Endothelial cell of umbilical vein (primary cell): ENCODE measurements at regions of chr1 and their contacts with region 1.

Region 1: DNA sequence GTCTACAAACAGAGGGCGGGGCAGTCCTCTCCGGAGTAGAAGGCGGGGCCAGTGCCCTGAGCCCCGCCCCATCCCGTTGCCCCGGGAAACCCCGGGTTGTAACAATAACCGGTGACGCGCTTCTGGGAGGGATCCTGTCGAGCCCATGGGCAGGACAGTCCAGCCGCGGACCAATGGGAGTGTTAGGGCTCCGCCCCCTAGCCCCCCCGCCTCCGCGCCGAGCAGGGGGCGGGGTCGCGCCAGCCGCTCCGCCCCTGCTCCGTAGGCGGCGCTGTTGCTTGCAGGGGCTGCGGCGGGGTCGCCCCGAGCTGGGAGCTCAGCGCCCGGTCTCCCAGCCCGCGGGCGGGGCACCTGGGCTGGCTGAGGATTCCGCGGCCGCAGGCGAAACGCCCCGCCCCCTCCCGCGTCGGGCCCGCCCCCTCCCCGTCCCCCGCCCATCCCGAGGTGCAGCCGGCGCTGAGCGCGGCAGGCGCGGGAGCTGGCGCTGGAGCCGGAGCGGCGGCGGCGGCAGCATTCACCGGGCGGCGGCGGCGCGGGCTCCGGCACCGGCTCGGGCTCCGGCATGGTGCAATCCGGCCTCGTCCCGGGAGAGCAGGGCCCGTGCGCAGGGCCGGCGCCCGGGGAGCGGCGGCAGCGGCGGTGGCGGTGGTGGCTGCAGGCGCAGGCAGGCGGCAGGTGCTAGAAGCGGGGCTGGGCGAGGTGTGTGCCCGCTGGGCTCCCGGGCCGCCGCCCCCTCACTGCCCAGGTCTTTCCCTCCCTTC is at the start of gene FOXO6:
- DNase-seq: peak; percentile 96
- H3K4me3 ChIP-seq: peak within 1 kb of the TSS in 2 of 3 experiments; percentile 32 to 36
- H3K27ac ChIP-seq: no peak within 1 kb of the TSS
- H3K4me1 ChIP-seq: peaks cover 3% of the 10 kb centered on the region
- H3K27me3 ChIP-seq: peaks cover 14 to 22% of the 10 kb centered on the region in 2 experiments
- CTCF ChIP-seq: peak; percentile 47 to 59
- POLR2A ChIP-seq: no peak
- total RNA-seq, gene FOXO6: 0.18 and 0.38 TPM in 2 replicates

Region 2: GRCh38 chr1:41341772-41342562 is 19.2 kb before region 1 on chr1:
- CTCF ChIA-PET with region 1: interaction called, 18 read pairs
- POLR2A ChIA-PET with region 1: no interaction called
- dilution Hi-C with region 1: no loop called
- intact Hi-C with region 1: loop called (anchors 1 kb)
- DNase-seq: peak; percentile 77
- H3K4me3 ChIP-seq: peak overlapping the region in 1 of 3 experiments; percentile 29
- H3K27ac ChIP-seq: peak overlapping the region; percentile 51
- H3K4me1 ChIP-seq: peaks cover 15% of the 10 kb centered on the region
- H3K27me3 ChIP-seq: peaks cover 4 to 6% of the 10 kb centered on the region in 2 experiments
- CTCF ChIP-seq: no peak
- POLR2A ChIP-seq: no peak

Region 3: DNA sequence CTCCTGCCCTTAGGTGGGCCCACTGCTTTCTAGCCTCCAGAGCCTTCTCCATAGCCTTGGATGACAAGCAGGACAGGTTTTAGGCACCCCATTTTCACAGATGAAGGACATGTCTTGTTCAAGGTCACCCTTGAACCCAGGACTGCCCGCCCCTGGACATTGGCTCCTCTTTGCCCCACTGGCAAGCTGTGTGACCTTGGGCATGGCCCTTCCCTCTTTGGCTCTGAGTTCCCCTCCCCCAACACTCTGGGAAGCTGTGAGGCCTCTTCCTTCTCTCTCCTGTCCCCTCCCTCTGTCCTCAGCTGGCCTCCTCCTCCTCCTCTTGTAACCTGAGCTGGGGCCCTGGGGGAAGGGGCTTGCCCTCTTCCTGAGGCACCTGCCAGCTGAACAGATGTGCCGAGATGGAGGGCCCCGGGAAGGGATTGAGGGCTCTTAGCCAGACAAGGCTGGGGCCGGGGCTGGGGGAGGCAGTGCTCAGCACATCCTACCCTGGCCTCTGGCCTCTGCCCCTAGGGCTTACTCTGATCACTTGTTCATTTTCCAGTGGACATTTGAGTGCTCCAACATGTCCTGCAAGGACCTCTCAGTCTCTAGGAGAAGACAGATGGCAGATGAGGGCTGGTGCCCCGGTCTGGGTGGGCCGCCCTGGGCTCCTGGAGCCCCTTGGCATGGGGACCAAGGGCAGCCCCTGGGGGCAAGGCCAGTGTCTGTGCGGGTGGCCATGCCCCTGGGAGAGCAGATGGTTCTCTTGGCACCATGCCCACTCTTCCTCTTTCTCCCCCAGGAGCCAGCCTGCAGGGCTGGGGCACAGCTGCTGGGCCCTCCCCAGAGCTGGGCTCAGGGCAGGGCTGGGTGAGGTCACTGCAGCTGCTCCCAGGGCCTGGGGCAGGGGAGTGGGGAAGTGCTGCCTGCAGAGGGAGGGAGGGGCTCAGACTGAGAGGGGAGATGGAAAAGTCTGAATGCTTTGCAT is 10.7 kb after region 1 on chr1:
- CTCF ChIA-PET with region 1: interaction called, 11 read pairs
- POLR2A ChIA-PET with region 1: no interaction called
- dilution Hi-C with region 1: no loop called
- intact Hi-C with region 1: no loop called
- DNase-seq: no peak
- H3K4me3 ChIP-seq: no peak overlapping the region
- H3K27ac ChIP-seq: no peak overlapping the region
- H3K4me1 ChIP-seq: no peaks in the 10 kb centered on the region
- H3K27me3 ChIP-seq: peaks cover 10 to 16% of the 10 kb centered on the region in 2 experiments
- CTCF ChIP-seq: no peak
- POLR2A ChIP-seq: no peak

Region 4: DNA sequence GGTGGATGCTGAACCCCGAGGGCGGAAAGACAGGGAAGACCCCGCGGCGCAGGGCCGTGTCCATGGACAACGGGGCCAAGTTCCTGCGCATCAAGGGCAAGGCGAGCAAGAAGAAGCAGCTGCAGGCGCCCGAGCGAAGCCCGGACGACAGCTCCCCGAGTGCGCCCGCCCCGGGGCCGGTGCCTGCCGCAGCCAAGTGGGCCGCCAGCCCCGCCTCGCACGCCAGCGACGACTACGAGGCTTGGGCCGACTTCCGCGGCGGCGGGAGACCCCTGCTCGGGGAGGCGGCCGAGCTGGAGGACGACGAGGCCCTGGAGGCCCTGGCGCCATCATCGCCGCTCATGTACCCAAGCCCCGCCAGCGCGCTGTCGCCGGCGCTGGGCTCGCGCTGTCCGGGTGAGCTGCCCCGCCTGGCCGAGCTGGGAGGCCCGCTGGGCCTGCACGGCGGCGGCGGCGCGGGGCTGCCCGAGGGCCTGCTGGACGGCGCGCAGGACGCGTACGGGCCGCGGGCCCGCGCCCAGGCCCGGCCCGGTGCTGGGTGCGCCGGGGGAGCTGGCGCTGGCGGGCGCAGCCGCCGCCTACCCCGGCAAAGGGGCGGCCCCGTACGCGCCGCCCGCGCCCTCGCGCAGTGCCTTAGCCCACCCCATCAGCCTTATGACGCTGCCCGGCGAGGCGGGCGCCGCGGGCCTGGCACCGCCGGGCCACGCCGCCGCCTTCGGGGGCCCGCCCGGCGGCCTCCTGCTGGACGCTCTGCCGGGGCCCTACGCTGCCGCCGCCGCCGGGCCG is 20.7 kb after region 1 on chr1:
- CTCF ChIA-PET with region 1: interaction called, 12 read pairs
- POLR2A ChIA-PET with region 1: interaction called, 3 read pairs
- dilution Hi-C with region 1: no loop called
- intact Hi-C with region 1: loop called (anchors 1 kb)
- DNase-seq: peak; percentile 17
- H3K4me3 ChIP-seq: peak overlapping the region; percentile 25 to 38 (median 35)
- H3K27ac ChIP-seq: peak overlapping the region; percentile 64
- H3K4me1 ChIP-seq: peaks cover 2% of the 10 kb centered on the region
- H3K27me3 ChIP-seq: peaks cover 6 to 17% of the 10 kb centered on the region in 2 experiments
- CTCF ChIP-seq: no peak
- POLR2A ChIP-seq: peak; percentile 37

Region 5: GRCh38 chr1:41504114-41505035 is 143.2 kb after region 1 on chr1:
- CTCF ChIA-PET with region 1: no interaction called
- POLR2A ChIA-PET with region 1: no interaction called
- dilution Hi-C with region 1: no loop called
- intact Hi-C with region 1: no loop called
- DNase-seq: no peak
- H3K4me3 ChIP-seq: no peak overlapping the region
- H3K27ac ChIP-seq: no peak overlapping the region
- H3K4me1 ChIP-seq: no peaks in the 10 kb centered on the region
- H3K27me3 ChIP-seq: no peaks in the 10 kb centered on the region
- CTCF ChIP-seq: no peak
- POLR2A ChIP-seq: no peak

Region 6: DNA sequence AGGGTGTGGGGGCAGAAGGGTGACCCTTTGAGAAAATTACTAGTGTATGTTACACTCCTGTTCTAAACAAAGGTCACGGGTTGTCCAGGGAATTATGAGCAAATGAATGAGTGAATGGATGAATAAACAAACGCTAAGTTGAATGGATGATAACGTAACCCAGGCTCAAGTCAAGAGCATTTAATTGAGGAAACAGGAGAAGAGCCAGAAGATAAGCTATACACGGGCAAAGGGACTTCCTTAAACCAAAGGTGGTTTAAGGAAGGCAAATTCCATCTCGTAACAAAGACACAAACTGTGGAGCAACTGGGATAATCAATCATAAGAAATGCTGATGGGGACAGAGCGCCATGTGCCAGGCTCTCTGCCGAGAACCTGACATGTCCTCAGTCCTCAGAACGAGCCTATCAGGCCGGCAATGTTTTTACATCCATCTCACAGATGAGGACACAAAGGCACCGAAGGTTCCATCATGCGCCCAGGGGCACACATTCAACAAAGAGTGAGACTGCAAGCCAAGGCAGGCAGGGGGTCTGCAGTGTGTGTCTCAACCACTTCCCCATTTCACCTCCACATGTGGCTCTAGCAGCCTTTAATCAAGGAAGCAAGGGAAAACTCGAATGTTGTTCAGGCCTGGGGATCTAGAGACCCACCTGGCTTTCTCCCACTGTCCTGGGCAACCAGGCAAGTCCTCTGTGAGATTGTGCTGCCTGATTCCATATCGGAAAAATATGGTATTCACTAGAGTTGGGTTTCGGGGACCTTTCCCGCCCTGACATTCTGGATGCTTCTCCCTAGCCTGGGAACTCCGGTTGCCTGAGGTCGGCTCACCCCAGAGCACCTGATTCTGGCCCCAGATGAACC is 250.1 kb after region 1 on chr1:
- CTCF ChIA-PET with region 1: no interaction called
- POLR2A ChIA-PET with region 1: no interaction called
- dilution Hi-C with region 1: no loop called
- intact Hi-C with region 1: no loop called
- DNase-seq: no peak
- H3K4me3 ChIP-seq: no peak overlapping the region
- H3K27ac ChIP-seq: no peak overlapping the region
- H3K4me1 ChIP-seq: no peaks in the 10 kb centered on the region
- H3K27me3 ChIP-seq: peaks cover 0 to 3% of the 10 kb centered on the region in 2 experiments
- CTCF ChIP-seq: no peak
- POLR2A ChIP-seq: no peak

Region 7: DNA sequence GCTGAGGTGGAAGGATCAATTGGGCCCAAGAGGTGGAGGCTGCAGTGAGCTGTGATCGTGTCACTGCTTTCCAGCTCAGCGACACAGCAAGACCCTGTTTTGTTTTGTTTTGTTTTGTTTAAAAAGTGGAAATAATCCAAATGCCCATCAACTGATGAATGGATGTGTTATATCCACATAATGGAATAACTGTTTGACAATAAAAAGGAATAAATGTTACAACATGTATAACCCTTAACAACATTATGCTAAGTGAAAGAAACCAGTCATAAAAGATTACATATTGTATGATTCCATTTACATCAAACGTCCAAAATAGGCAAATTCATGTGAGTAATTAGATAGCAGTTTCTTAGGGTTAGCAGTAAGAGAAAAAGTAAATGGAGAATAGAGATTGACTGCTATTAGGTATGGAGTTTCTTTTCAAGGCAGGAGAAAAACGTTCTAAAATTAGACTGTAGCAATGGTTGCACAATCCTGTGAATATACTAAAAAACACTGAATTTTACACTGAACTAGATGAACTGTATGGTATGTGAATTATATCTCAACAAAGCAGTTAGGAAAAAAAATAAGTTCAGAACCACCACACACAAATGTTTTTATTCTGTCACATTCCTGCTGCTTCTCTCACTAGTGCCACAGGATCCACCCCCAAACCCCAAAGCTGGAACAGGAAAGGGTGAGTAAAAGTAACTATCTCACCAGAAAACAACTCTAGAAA is 958.1 kb after region 1 on chr1:
- CTCF ChIA-PET with region 1: no interaction called
- POLR2A ChIA-PET with region 1: no interaction called
- dilution Hi-C with region 1: no loop called
- intact Hi-C with region 1: no loop called
- DNase-seq: peak; percentile 43
- H3K4me3 ChIP-seq: peak overlapping the region in 1 of 3 experiments; percentile 51
- H3K27ac ChIP-seq: peak overlapping the region; percentile 35
- H3K4me1 ChIP-seq: peaks cover 46% of the 10 kb centered on the region
- H3K27me3 ChIP-seq: no peaks in the 10 kb centered on the region
- CTCF ChIP-seq: no peak
- POLR2A ChIP-seq: no peak